ENCODE measurements at regions of chr13 and their contacts with region 1.

Region 1: GRCh38 chr13:92270990-92271389 is 872.6 kb downstream of the GPC5 start:
- DNase-seq: no peak
- ATAC-seq: no peak
- H3K4me3 ChIP-seq: no peak overlapping the region
- H3K27ac ChIP-seq: no peak overlapping the region
- H3K4me1 ChIP-seq: no peaks in the 10 kb centered on the region
- H3K27me3 ChIP-seq: no peaks in the 10 kb centered on the region
- CTCF ChIP-seq: no peak
- POLR2A ChIP-seq: no peak
- RAD21 ChIP-seq: no peak

Region 2: GRCh38 chr13:90315061-90315460 is 1955.9 kb before region 1 on chr13:
- CTCF ChIA-PET with region 1: no interaction called
- POLR2A ChIA-PET with region 1: no interaction called
- dilution Hi-C with region 1: no loop called
- in situ Hi-C with region 1: no loop called
- intact Hi-C with region 1: loop called (anchors 5 kb)
- DNase-seq: no peak
- ATAC-seq: no peak
- H3K4me3 ChIP-seq: no peak overlapping the region
- H3K27ac ChIP-seq: no peak overlapping the region
- H3K4me1 ChIP-seq: no peaks in the 10 kb centered on the region
- H3K27me3 ChIP-seq: no peaks in the 10 kb centered on the region
- CTCF ChIP-seq: no peak
- POLR2A ChIP-seq: no peak
- RAD21 ChIP-seq: no peak

Region 3: GRCh38 chr13:91278888-91279287 is 992.1 kb before region 1 on chr13:
- CTCF ChIA-PET with region 1: no interaction called
- POLR2A ChIA-PET with region 1: no interaction called
- dilution Hi-C with region 1: no loop called
- in situ Hi-C with region 1: no loop called
- intact Hi-C with region 1: no loop called
- DNase-seq: no peak
- ATAC-seq: no peak
- H3K4me3 ChIP-seq: no peak overlapping the region
- H3K27ac ChIP-seq: no peak overlapping the region
- H3K4me1 ChIP-seq: no peaks in the 10 kb centered on the region
- H3K27me3 ChIP-seq: no peaks in the 10 kb centered on the region
- CTCF ChIP-seq: no peak
- POLR2A ChIP-seq: no peak
- RAD21 ChIP-seq: no peak

Measured in IMR-90 (cell line).